ENCODE measurements at regions of chr5 and their contacts with region 1.

Region 1: DNA sequence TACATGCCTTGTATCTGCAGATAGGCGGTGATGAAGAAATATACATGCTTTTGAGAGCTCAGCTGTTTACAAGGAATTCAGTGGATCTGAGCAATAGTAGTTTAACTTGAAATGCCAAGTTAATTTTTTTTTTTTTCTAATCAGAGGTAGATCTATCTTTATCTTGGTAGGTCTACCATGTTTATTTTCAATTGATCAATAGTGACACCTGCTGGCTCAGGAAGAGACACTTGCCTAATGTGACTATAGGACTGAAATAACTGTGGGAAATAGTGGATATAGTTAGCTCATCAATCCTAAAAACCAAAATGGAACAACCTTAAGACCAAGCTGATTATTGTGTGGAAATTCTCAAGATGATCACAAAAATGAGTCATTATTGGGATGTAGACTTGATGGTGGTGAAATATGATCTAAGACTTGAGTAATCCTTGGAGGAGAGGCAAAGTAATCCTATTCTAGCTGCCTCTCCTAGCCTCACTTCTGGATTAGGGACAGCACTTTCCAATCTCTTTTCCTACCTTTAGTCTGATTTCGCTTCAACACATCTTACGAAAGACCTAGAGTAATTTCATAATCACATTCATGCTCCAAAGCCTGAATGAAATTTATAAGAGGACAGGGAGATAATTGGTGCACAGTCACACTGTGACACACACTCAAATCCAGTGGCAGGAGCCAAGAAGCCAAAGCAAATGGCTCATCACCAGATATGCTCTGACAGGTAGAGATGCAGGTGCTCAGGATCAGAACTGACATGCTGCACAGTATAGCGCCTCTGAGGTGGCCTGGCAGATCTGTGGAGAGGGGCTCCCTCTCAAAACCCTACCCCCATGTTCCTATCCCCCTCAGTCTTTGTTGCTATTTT is 156.3 kb downstream of the HMHB1 start:
- DNase-seq: no peak
- ATAC-seq: peak; percentile 19 to 34

Region 2: DNA sequence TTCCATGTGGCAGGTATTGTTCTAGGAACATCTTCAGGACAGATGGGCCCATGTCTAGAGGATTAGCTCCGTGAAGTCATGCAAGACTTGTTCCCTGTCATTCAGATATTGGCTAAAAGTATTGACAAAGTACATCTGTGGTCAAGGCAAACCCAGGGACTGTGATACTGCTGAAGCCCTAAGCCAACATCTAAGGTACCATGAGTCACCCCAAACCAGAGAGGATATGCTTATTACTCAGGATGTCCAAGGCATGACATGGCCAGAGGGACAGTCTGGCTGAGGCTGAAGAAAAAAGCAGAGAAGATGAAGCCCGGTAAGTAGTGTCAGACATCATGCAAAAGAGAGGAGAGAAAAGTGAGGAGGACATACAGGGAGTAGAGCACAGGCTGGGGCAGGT is 125.3 kb before region 1 on chr5:
- intact Hi-C with region 1: loop called in 1 of 2 experiments (anchors 10 kb)
- DNase-seq: no peak
- ATAC-seq: no peak

Measured in left cardiac atrium (tissue), 4 donors.